ENCODE measurements at regions of chr12 and their contacts with region 1.

Region 1: GRCh38 chr12:31959161-31959700 is at the start of gene RESF1:
- DNase-seq: peak; percentile 90
- H3K4me3 Mint-ChIP-seq: peak within 1 kb of the TSS; percentile 90
- H3K27ac Mint-ChIP-seq: peak within 1 kb of the TSS; percentile 99
- H3K4me1 Mint-ChIP-seq: peaks cover 63% of the 10 kb centered on the region
- H3K27me3 Mint-ChIP-seq: no peaks in the 10 kb centered on the region
- total RNA-seq, gene RESF1: 137 to 183 TPM

Region 2: DNA sequence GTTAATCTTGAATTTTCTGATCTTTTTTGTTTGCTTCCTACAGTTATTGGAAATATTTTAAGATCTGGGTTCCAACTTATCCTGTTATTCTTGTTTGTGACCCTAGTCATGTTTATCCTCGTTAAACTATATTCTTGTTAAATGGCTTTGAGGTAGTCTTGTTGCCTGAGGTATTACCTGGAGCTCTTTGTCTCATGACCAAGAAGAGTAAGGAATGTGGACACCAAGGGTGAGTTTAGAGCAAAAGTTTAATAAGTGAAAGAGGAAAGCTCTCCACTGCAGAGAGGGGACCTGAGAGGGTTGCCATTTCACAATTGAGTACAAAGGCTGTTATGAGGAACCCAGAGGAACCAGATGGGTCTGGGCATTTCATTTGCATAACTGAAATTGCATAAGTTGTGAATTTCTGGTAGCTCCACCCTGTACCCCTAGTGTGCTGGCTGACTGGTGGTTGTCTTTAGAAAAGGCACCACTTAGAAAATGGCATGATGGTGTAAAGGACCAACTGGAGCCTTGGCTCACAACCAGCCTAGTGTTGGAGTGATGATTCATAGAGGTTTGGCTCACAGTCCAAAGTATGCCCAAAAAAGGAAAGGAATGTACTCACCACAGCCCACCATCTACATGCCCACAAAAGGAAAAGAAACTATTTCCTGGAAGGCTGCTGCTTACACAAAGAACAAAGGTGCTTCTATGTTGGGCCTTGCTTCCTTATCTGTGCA is 36.7 kb before region 1 on chr12:
- CTCF ChIA-PET with region 1: interaction called, 10 read pairs
- POLR2A ChIA-PET with region 1: no interaction called
- DNase-seq: no peak
- H3K4me3 Mint-ChIP-seq: no peak overlapping the region
- H3K27ac Mint-ChIP-seq: no peak overlapping the region
- H3K4me1 Mint-ChIP-seq: peaks cover 11% of the 10 kb centered on the region
- H3K27me3 Mint-ChIP-seq: no peaks in the 10 kb centered on the region

Measured in activated CD4-positive, alpha-beta T cell treated with anti-CD3 and anti-CD28 coated beads, Interleukin-2, amount 10 ng/mL, durations not matched to agents 7 days and 5 days (primary cell).